CD8-positive, alpha-beta T cell (primary cell): ENCODE measurements at regions of chr20 and their contacts with region 1.

Region 1: GRCh38 chr20:48252526-48253064 is 467.3 kb upstream of the SULF2 start:
- DNase-seq: no peak
- ATAC-seq: no peak
- H3K4me3 ChIP-seq: no peak overlapping the region
- H3K4me3 Mint-ChIP-seq: no peak overlapping the region
- H3K27ac ChIP-seq: no peak overlapping the region
- H3K27ac Mint-ChIP-seq: no peak overlapping the region
- H3K4me1 ChIP-seq: no peaks in the 10 kb centered on the region
- H3K4me1 Mint-ChIP-seq: no peaks in the 10 kb centered on the region
- H3K27me3 ChIP-seq: no peaks in the 10 kb centered on the region
- H3K27me3 Mint-ChIP-seq: peaks cover 13% of the 10 kb centered on the region
- CTCF ChIP-seq: no peak

Region 2: GRCh38 chr20:48262466-48263347 is 10.1 kb after region 1 on chr20:
- CTCF ChIA-PET with region 1: no interaction called
- POLR2A ChIA-PET with region 1: no interaction called
- intact Hi-C with region 1: no loop called
- DNase-seq: no peak
- ATAC-seq: no peak
- H3K4me3 ChIP-seq: no peak overlapping the region
- H3K4me3 Mint-ChIP-seq: no peak overlapping the region
- H3K27ac ChIP-seq: no peak overlapping the region
- H3K27ac Mint-ChIP-seq: no peak overlapping the region
- H3K4me1 ChIP-seq: no peaks in the 10 kb centered on the region
- H3K4me1 Mint-ChIP-seq: no peaks in the 10 kb centered on the region
- H3K27me3 ChIP-seq: no peaks in the 10 kb centered on the region
- H3K27me3 Mint-ChIP-seq: peaks cover 8% of the 10 kb centered on the region
- CTCF ChIP-seq: no peak

Region 3: DNA sequence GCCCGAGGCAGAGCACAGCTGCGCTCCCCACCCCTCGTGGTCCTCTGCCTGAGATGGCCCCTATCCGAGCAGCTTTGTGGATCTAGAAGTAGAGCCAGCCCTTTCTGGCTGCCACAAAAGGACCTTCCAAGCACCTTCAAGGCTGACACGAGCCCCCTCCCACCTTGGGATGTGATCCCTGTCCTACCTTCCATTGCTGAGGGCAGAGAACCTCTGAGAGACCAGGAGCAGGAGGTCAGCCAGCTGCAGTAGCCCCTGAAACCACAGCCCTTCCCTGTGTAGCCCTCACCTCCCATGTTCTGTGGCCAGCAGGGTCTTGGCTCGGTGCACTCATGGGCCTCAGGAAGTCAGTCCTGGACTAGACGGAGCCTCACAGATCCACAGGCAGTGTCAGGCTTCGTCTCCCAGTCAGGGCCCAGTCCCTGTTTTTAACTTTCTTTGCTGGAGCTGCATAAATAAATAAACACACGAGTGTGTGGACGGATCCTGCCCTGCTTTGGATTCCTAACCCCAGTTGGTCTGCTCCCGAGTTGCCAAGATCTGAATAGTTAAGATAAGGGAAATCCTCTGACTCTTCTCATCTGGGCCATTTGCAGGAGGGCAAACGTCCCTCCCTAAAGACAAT is 67.5 kb after region 1 on chr20:
- CTCF ChIA-PET with region 1: no interaction called
- POLR2A ChIA-PET with region 1: no interaction called
- intact Hi-C with region 1: loop called in 1 of 2 experiments (anchors 2 kb)
- DNase-seq: no peak
- ATAC-seq: no peak
- H3K4me3 ChIP-seq: no peak overlapping the region
- H3K4me3 Mint-ChIP-seq: no peak overlapping the region
- H3K27ac ChIP-seq: no peak overlapping the region
- H3K27ac Mint-ChIP-seq: no peak overlapping the region
- H3K4me1 ChIP-seq: no peaks in the 10 kb centered on the region
- H3K4me1 Mint-ChIP-seq: no peaks in the 10 kb centered on the region
- H3K27me3 ChIP-seq: no peaks in the 10 kb centered on the region
- H3K27me3 Mint-ChIP-seq: peaks cover 14% of the 10 kb centered on the region
- CTCF ChIP-seq: no peak